Activated T-helper 1 cell treated with anti-CD3 and anti-CD28 coated beads, Interleukin-12 subunit alpha, Interleukin-12 subunit beta, Interleukin-2, Interleukin-4 antibody, amounts not matched to agents 30 ng/mL and 10 ng/mL and 1 ng/mL, durations not matched to agents 14 hours and 24 hours and 36 hours (primary cell): ENCODE measurements at regions of chr17 and their contacts with region 1.

Region 1: GRCh38 chr17:17356149-17356930 is 53.2 kb downstream of the NT5M start:
- DNase-seq: peak; percentile 55
- H3K4me3 Mint-ChIP-seq: no peak overlapping the region
- H3K27ac Mint-ChIP-seq: no peak overlapping the region
- H3K4me1 Mint-ChIP-seq: no peaks in the 10 kb centered on the region
- H3K27me3 Mint-ChIP-seq: peaks cover 19% of the 10 kb centered on the region

Region 2: GRCh38 chr17:17440010-17440843 is 83.9 kb after region 1 on chr17:
- intact Hi-C with region 1: loop called (anchors 1 kb)
- DNase-seq: peak; percentile 48
- H3K4me3 Mint-ChIP-seq: no peak overlapping the region
- H3K27ac Mint-ChIP-seq: no peak overlapping the region
- H3K4me1 Mint-ChIP-seq: no peaks in the 10 kb centered on the region
- H3K27me3 Mint-ChIP-seq: no peaks in the 10 kb centered on the region

Region 3: DNA sequence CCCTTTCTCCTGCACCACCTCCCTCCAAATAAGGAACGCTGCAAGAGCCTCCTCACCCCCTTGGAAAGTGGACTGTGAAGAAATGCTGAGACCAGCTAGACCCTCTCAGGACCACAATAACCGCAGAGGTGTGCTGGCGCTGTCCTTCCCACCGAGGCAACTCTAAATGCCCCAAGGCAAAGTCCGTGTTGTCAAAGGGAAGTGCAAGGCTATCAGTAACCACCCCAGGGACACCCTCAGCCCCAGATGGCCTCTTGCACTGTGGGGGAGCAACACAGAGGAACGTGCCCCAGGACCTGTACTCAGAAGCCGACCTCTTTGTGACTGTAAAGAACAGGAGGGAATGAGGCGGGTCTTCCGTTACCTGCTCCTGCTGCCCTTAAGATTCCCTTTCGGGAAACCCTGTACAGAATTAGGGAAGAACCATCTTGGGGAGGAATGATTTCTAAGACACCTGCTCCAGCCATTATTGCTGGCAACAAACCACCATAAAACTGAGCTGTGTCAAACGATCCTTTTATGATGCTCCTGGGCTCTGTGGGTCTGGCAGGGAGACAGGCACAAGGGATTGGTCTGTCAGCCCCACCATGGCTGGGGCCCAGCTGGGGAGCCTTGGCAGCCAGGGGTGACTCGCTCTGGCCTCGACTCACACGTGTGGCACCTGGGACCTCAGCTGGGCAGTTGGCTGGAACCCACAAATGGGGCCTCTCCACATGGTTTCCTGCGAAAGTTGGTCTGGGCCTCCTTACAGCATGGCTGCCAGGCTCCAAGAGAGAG is 105.9 kb after region 1 on chr17:
- intact Hi-C with region 1: no loop called
- DNase-seq: no peak
- H3K4me3 Mint-ChIP-seq: no peak overlapping the region
- H3K27ac Mint-ChIP-seq: no peak overlapping the region
- H3K4me1 Mint-ChIP-seq: no peaks in the 10 kb centered on the region
- H3K27me3 Mint-ChIP-seq: no peaks in the 10 kb centered on the region

Region 4: GRCh38 chr17:17568749-17569195 is 212.4 kb after region 1 on chr17:
- intact Hi-C with region 1: loop called (anchors 1 kb)
- DNase-seq: peak; percentile 34
- H3K4me3 Mint-ChIP-seq: no peak overlapping the region
- H3K27ac Mint-ChIP-seq: peak overlapping the region; percentile 34
- H3K4me1 Mint-ChIP-seq: no peaks in the 10 kb centered on the region
- H3K27me3 Mint-ChIP-seq: peaks cover 1% of the 10 kb centered on the region

Region 5: DNA sequence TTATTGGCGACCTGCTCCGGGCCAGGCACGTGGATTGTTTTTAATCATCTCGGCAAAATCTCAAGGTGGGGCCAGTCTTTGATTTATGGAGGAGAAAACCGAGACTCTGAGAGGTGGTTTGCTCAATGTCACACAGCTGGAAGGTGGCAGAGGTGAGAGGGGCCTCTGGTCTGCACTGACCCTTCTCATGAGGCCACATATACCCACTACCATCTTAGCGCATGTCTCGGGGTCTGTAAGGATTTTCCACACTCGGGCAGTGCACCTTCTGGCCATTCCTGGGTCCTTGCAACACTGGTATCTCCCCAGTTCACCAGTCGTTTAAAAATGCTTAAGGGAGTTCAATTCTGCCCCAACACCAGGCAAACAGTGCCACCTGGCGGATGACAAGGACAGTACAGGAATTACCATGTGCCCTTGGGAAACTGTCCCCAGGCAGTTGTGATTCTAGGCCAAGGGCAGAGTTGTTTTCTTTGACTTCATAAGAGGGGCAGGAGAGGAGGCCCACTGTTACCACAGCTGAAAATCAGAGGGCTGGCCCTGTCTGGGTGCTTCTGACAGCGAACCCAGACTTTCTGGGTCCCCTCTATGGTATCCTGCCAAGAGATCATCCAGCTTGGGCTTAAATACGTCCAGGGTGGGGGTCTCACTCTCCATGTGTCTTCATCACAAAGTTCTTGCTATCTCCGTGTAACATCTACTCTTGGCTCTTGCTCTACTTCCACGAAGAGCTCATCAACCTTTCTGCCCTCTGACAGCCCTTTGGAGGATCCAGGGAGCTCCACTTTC is 285.5 kb after region 1 on chr17:
- intact Hi-C with region 1: loop called (anchors 1 kb)
- DNase-seq: peak; percentile 67
- H3K4me3 Mint-ChIP-seq: no peak overlapping the region
- H3K27ac Mint-ChIP-seq: no peak overlapping the region
- H3K4me1 Mint-ChIP-seq: no peaks in the 10 kb centered on the region
- H3K27me3 Mint-ChIP-seq: peaks cover 7% of the 10 kb centered on the region

Region 6: GRCh38 chr17:18033442-18034099 is 677.2 kb after region 1 on chr17:
- intact Hi-C with region 1: loop called (anchors 5 kb)
- DNase-seq: peak; percentile 57
- H3K4me3 Mint-ChIP-seq: no peak overlapping the region
- H3K27ac Mint-ChIP-seq: peak overlapping the region; percentile 21
- H3K4me1 Mint-ChIP-seq: peaks cover 38% of the 10 kb centered on the region
- H3K27me3 Mint-ChIP-seq: no peaks in the 10 kb centered on the region